Sciatic nerve (tissue), 2 donors: ENCODE measurements at regions of chr4 and their contacts with region 1.

Region 1: DNA sequence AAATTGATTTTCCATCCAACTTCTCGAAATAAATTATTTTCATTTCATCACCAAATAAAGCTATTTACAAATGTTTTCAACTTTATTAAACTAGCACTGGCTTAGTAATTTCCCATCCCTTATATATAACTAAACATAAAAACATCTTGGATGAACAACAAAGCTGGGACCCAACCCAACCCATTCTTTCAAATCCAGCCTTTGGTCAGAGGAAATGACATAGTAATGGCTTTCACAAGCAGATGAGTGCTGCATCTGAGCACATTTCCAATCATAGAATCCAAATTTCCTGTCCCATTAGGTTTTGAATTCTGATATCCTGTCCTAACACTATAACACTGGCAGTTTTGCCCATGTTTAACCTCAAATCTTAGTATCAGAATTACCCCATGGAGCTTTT is 7.9 kb upstream of the EMCN start:
- DNase-seq: no peak
- ATAC-seq: no peak

Region 2: DNA sequence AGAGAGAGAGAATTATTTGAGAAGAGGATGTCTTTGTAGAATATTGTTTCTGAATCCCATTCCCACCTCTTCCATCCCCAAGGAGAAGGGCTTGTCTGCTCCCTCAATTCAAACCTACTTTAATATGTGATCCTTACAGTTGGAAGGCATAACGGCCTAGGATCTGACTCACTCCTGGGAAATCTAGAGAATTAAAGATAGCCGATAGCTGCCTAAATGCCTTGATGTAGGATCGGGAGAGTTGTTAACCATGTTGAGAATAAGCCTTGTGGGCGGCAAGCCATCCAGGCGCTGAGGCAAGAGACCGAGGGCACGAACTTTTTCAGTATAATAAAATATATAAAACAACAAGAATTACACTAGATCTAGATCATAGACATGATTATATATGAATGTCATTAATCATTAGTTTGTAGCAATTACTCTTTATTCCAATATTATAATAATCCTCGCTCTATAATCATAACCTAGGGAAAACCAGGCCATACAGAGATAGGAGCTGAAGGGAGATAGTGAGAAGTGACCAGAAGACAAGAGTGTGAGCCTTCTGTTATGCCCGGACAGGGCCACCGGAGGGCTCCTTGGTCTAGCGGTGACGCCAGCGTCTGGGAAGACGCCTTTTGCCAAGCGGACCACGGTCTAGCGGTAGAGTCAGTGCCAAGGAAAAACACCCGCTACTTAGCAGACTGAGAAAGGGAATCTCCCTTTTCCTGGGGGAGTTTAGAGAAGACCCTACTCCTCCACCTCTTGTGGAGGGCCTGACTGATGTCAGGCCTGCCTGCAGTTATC is 21.4 kb before region 1 on chr4:
- intact Hi-C with region 1: loop called (anchors 2 kb)
- DNase-seq: no peak
- ATAC-seq: no peak

Region 3: GRCh38 chr4:100707786-100708185 is 182.1 kb after region 1 on chr4:
- intact Hi-C with region 1: no loop called
- DNase-seq: no peak
- ATAC-seq: no peak